IMR-90 (cell line): ENCODE measurements at regions of chr10 and their contacts with region 1.

Region 1: DNA sequence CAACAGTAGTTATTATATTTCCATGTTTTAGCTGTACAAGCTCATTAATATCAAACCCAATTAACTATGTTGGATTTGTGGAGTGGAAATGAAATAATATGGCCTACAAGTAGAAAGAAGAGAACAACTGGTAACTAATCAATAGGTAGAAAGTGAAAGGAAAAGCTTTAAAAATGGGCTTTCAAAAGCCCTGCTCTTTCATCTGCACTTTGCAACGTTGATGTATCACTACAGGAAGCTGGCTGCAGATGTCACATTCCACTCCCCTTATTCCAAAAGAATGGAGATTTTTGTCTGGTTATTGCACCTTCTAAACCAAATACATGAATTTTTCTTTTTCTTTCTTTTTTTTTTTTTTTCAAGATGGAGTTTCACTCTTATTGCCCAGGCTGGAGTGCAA is 11.7 kb upstream of the MKI67 start:
- DNase-seq: peak; percentile 37
- ATAC-seq: no peak
- H3K4me3 ChIP-seq: no peak overlapping the region
- H3K27ac ChIP-seq: no peak overlapping the region
- H3K4me1 ChIP-seq: no peaks in the 10 kb centered on the region
- H3K27me3 ChIP-seq: peaks cover 4% of the 10 kb centered on the region
- CTCF ChIP-seq: no peak
- POLR2A ChIP-seq: no peak
- RAD21 ChIP-seq: no peak

Region 2: GRCh38 chr10:127832501-127832900 is 305.4 kb before region 1 on chr10:
- CTCF ChIA-PET with region 1: no interaction called
- POLR2A ChIA-PET with region 1: no interaction called
- dilution Hi-C with region 1: no loop called
- in situ Hi-C with region 1: no loop called
- intact Hi-C with region 1: no loop called
- DNase-seq: no peak
- ATAC-seq: no peak; the same call in 1 of the 2 replicates
- H3K4me3 ChIP-seq: no peak overlapping the region
- H3K27ac ChIP-seq: no peak overlapping the region
- H3K4me1 ChIP-seq: no peaks in the 10 kb centered on the region
- H3K27me3 ChIP-seq: no peaks in the 10 kb centered on the region
- CTCF ChIP-seq: no peak
- POLR2A ChIP-seq: no peak
- RAD21 ChIP-seq: no peak

Region 3: DNA sequence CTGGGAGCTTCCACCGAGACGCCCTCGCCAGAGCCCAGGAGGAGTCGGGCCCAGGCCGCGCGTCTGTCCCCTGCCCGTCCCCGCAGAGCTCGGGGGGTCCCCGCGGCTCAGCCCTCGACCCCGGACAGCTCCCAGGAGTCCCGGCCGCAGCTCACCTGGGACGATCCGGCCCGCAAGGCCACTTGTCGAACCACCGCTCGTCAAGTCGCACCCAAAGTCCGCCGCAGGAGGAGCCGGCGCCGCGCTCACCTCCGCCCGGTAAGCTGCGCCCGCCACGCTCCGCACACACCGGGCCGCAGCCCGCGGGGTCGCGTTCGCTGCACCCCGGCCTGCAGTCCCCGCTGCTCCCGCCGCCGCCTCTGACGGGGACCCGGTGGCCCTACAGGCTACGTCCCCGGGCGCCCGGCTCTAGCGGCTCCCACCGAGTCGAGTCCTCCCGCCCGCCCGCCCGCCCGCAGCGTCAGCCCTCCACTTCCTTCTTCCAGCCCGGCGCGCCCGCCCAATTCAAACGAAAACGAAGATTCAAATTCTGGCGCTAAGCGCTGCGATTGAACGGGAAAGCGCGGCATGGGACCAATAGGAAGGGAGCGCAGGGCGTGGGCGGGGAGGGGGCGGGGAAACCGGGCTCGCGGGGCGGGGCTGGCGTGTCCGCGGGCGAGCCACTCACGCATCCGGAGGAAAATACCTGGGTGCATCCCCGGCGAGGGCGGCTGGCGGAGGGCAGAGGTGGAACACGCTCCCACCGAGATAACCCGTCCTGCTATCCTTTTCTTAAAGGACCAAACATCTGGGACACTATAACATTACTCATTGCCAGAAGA is 11.7 kb before region 1 on chr10 and contains the start of gene MKI67:
- CTCF ChIA-PET with region 1: interaction called, 11 read pairs
- POLR2A ChIA-PET with region 1: no interaction called
- dilution Hi-C with region 1: no loop called
- in situ Hi-C with region 1: no loop called
- intact Hi-C with region 1: no loop called
- DNase-seq: peak; percentile 83
- ATAC-seq: peak; percentile 91
- H3K4me3 ChIP-seq: peak within 1 kb of the TSS; percentile 87
- H3K27ac ChIP-seq: peak within 1 kb of the TSS; percentile 26; the same call in 1 of the 2 replicates
- H3K4me1 ChIP-seq: peaks cover 6% of the 10 kb centered on the region; the same call in 1 of the 2 replicates
- H3K27me3 ChIP-seq: no peaks in the 10 kb centered on the region
- CTCF ChIP-seq: no peak
- POLR2A ChIP-seq: no peak
- RAD21 ChIP-seq: no peak
- total RNA-seq, gene MKI67: 36.4 and 39.2 TPM in 2 replicates

Region 4: DNA sequence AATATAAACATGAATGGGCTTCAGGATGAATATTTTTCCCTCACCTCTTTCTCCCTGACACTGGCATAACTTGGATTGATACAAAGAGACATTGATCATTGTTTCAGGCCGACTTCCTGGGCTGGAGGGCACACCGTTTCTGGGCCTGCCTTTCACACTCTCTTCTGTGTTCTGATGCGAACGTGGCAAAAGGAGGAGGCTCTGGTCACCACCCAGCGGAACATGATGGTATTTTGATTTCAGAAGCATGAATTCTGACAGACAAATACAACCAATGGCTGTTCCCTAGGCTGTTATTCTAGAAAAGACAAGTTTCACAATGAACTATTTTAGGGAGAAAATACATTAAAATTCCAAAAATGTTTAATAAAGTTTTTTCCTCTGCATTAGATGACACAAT is 522.8 kb after region 1 on chr10:
- CTCF ChIA-PET with region 1: no interaction called
- POLR2A ChIA-PET with region 1: no interaction called
- dilution Hi-C with region 1: no loop called
- in situ Hi-C with region 1: no loop called
- intact Hi-C with region 1: no loop called
- DNase-seq: no peak
- ATAC-seq: no peak
- H3K4me3 ChIP-seq: no peak overlapping the region
- H3K27ac ChIP-seq: no peak overlapping the region
- H3K4me1 ChIP-seq: no peaks in the 10 kb centered on the region
- H3K27me3 ChIP-seq: no peaks in the 10 kb centered on the region
- CTCF ChIP-seq: no peak
- POLR2A ChIP-seq: no peak
- RAD21 ChIP-seq: no peak